ENCODE measurements at regions of chr12 and their contacts with region 1.

Region 1: GRCh38 chr12:56117778-56118687 is at the start of gene ZC3H10:
- DNase-seq: peak; percentile 80 to 99 (median 96)
- ATAC-seq: peak; percentile 89
- H3K4me3 ChIP-seq: peak within 1 kb of the TSS; percentile 95
- H3K4me3 Mint-ChIP-seq: peak within 1 kb of the TSS; percentile 87 to 100 (median 96)
- H3K27ac ChIP-seq: peak within 1 kb of the TSS; percentile 93
- H3K27ac Mint-ChIP-seq: peak within 1 kb of the TSS; percentile 95 to 99 (median 98)
- H3K4me1 ChIP-seq: peaks cover 24 to 25% of the 10 kb centered on the region in 2 donors
- H3K4me1 Mint-ChIP-seq: peaks cover 24 to 47% (median 34%) of the 10 kb centered on the region in 7 donors
- H3K27me3 ChIP-seq: no peaks in the 10 kb centered on the region
- H3K27me3 Mint-ChIP-seq: no peaks in the 10 kb centered on the region
- total RNA-seq, gene ZC3H10: 7.8 to 16.3 (median 13.3) TPM

Region 2: GRCh38 chr12:55926738-55927587 is 191.1 kb before region 1 on chr12:
- CTCF ChIA-PET with region 1: no interaction called
- POLR2A ChIA-PET with region 1: interaction called, 12 read pairs
- intact Hi-C with region 1: loop called (anchors 1 to 2 kb)
- DNase-seq: peak; percentile 70 to 91 (median 87)
- ATAC-seq: peak; percentile 65
- H3K4me3 ChIP-seq: peak overlapping the region; percentile 99
- H3K4me3 Mint-ChIP-seq: peak overlapping the region; percentile 96 to 100 (median 98)
- H3K27ac ChIP-seq: peak overlapping the region; percentile 90
- H3K27ac Mint-ChIP-seq: peak overlapping the region; percentile 96 to 100 (median 97)
- H3K4me1 ChIP-seq: peaks cover 25 to 28% of the 10 kb centered on the region in 2 donors
- H3K4me1 Mint-ChIP-seq: peaks cover 33 to 61% (median 50%) of the 10 kb centered on the region in 7 donors
- H3K27me3 ChIP-seq: no peaks in the 10 kb centered on the region
- H3K27me3 Mint-ChIP-seq: peaks cover 0 to 2% (median 0%) of the 10 kb centered on the region in 5 donors

Region 3: DNA sequence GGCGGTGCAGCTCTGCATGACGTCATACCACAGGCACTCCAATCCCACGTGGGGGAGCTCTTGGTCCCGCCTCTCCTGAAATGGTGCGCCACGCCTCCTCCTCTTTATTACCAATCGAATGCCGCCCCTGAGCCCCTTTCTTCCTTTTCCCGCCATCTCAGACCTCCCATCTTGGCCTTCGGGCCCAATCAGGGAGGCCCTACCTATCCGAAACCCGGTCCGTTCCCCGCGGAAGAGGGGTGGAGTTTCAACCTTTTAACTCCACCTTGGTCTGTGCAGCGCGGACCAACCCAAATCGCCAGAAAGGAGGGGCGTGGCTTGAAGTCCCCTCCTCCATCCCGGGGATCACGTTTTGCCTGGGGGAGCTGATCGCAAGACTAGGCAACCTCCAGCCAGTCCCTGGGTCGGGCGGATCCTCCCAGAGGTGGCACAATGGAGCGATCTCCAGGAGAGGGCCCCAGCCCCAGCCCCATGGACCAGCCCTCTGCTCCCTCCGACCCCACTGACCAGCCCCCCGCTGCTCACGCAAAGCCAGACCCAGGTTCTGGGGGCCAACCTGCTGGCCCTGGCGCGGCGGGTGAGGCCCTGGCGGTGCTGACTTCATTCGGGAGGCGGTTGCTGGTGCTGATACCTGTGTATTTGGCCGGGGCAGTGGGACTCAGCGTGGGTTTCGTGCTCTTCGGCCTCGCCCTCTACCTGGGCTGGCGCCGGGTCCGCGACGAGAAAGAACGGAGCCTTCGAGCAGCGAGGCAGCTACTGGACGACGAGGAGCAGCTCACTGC is 10.0 kb after region 1 on chr12 and contains the start of gene ESYT1:
- CTCF ChIA-PET with region 1: interaction called, 20 read pairs
- POLR2A ChIA-PET with region 1: interaction called, 94 read pairs
- intact Hi-C with region 1: loop called (anchors 1 kb)
- DNase-seq: peak; percentile 75 to 100 (median 98)
- ATAC-seq: peak; percentile 94
- H3K4me3 ChIP-seq: peak within 1 kb of the TSS; percentile 77
- H3K4me3 Mint-ChIP-seq: peak within 1 kb of the TSS; percentile 95 to 100 (median 98)
- H3K27ac ChIP-seq: peak within 1 kb of the TSS; percentile 84
- H3K27ac Mint-ChIP-seq: peak within 1 kb of the TSS; percentile 86 to 99 (median 91)
- H3K4me1 ChIP-seq: peaks cover 39 to 54% of the 10 kb centered on the region in 2 donors
- H3K4me1 Mint-ChIP-seq: peaks cover 40 to 76% (median 65%) of the 10 kb centered on the region in 7 donors
- H3K27me3 ChIP-seq: no peaks in the 10 kb centered on the region
- H3K27me3 Mint-ChIP-seq: no peaks in the 10 kb centered on the region
- total RNA-seq, gene ESYT1: 121 to 300 (median 221) TPM

Region 4: DNA sequence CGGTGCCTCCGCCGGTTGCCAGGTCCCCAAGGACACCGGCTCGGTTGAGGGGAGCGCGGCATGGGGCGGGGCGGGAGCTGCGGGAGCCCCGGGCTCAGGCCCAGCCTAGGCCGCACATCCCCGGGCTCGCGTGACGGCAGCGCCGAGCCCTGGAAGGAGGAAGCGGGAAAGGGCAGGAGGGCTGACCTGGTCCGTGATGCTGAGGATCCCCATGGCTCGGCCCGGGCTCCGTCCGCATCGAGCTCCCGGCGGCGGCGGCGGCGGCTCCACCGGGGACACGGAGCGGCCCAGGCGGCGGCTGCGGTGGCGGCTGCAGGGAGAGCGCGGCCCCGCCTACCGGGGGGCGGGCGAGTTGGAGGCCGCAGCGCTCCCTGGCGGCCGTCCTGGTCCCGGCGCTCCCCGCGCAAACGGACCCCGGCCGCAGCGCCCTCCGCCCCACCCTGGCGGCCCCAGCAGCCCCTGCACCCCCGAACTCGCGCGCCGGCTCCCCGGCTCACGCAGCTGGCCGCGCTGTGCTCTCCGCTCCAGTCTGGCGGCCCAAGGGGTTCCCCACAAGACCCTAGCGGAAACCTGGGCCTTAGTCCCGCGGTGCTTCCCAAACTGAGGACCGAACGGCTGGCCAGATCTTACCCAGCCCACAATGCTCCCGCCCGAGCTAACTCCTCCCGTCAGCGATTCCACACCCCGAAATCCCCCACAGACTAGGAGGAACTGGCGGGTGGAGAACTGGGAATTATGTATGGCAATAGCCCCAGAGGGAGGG is 140.2 kb after region 1 on chr12 and contains the start of gene ANKRD52:
- CTCF ChIA-PET with region 1: interaction called, 7 read pairs
- POLR2A ChIA-PET with region 1: interaction called, 7 read pairs
- intact Hi-C with region 1: loop called (anchors 1 kb)
- DNase-seq: peak; percentile 69 to 92 (median 84)
- ATAC-seq: peak; percentile 99
- H3K4me3 ChIP-seq: peak within 1 kb of the TSS; percentile 99
- H3K4me3 Mint-ChIP-seq: peak within 1 kb of the TSS; percentile 87 to 97 (median 93)
- H3K27ac ChIP-seq: peak within 1 kb of the TSS; percentile 90
- H3K27ac Mint-ChIP-seq: peak within 1 kb of the TSS; percentile 83 to 94 (median 90)
- H3K4me1 ChIP-seq: peaks cover 18 to 19% of the 10 kb centered on the region in 2 donors
- H3K4me1 Mint-ChIP-seq: peaks cover 13 to 27% (median 22%) of the 10 kb centered on the region in 7 donors
- H3K27me3 ChIP-seq: no peaks in the 10 kb centered on the region
- H3K27me3 Mint-ChIP-seq: peaks cover 0 to 2% (median 0%) of the 10 kb centered on the region in 5 donors
- total RNA-seq, gene ANKRD52: 26.9 to 64.4 (median 40.7) TPM

Region 5: GRCh38 chr12:56461235-56462159 is 343.5 kb after region 1 on chr12:
- CTCF ChIA-PET with region 1: interaction called, 6 read pairs
- POLR2A ChIA-PET with region 1: interaction called, 11 read pairs
- intact Hi-C with region 1: loop called (anchors 1 kb)
- DNase-seq: no peak
- ATAC-seq: no peak
- H3K4me3 ChIP-seq: no peak overlapping the region
- H3K4me3 Mint-ChIP-seq: no peak overlapping the region
- H3K27ac ChIP-seq: no peak overlapping the region
- H3K27ac Mint-ChIP-seq: no peak overlapping the region
- H3K4me1 ChIP-seq: peaks cover 0 to 6% of the 10 kb centered on the region in 2 donors
- H3K4me1 Mint-ChIP-seq: peaks cover 0 to 10% (median 5%) of the 10 kb centered on the region in 7 donors
- H3K27me3 ChIP-seq: no peaks in the 10 kb centered on the region
- H3K27me3 Mint-ChIP-seq: no peaks in the 10 kb centered on the region

Region 6: DNA sequence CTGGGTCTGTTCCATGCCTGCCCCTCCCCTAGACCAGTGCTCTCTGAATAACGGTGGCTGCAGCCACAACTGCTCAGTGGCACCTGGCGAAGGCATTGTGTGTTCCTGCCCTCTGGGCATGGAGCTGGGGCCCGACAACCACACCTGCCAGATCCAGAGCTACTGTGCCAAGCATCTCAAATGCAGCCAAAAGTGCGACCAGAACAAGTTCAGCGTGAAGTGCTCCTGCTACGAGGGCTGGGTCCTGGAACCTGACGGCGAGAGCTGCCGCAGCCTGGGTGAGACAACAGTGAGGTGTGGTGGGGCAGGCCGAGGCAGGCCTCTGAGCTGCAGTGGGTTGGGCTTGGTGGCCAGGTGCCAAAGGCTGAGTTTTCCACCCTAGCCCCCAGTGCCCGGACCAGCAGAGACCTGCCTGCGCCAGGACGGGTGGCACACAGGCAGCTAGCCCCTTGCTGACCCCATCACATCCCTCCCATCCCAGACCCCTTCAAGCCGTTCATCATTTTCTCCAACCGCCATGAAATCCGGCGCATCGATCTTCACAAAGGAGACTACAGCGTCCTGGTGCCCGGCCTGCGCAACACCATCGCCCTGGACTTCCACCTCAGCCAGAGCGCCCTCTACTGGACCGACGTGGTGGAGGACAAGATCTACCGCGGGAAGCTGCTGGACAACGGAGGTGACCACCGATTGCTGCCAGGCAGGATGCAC is 1057.5 kb after region 1 on chr12:
- CTCF ChIA-PET with region 1: no interaction called
- POLR2A ChIA-PET with region 1: no interaction called
- intact Hi-C with region 1: no loop called
- DNase-seq: peak in 4 of 9 donors; percentile 13 to 66 (median 26)
- ATAC-seq: peak; percentile 63
- H3K4me3 ChIP-seq: no peak overlapping the region
- H3K4me3 Mint-ChIP-seq: no peak overlapping the region
- H3K27ac ChIP-seq: no peak overlapping the region
- H3K27ac Mint-ChIP-seq: peak overlapping the region in 1 of 9 donors; percentile 46
- H3K4me1 ChIP-seq: no peaks in the 10 kb centered on the region
- H3K4me1 Mint-ChIP-seq: peaks cover 0 to 6% (median 0%) of the 10 kb centered on the region in 7 donors
- H3K27me3 ChIP-seq: no peaks in the 10 kb centered on the region
- H3K27me3 Mint-ChIP-seq: no peaks in the 10 kb centered on the region

Region 7: GRCh38 chr12:57487597-57488401 is 1369.8 kb after region 1 on chr12 and contains the start of gene MARS1:
- CTCF ChIA-PET with region 1: no interaction called
- POLR2A ChIA-PET with region 1: no interaction called
- intact Hi-C with region 1: loop called in 1 of 2 experiments (anchors 5 kb)
- DNase-seq: peak; percentile 71 to 95 (median 93)
- ATAC-seq: peak; percentile 99
- H3K4me3 ChIP-seq: peak within 1 kb of the TSS; percentile 89
- H3K4me3 Mint-ChIP-seq: peak within 1 kb of the TSS; percentile 89 to 100 (median 98)
- H3K27ac ChIP-seq: peak within 1 kb of the TSS; percentile 86
- H3K27ac Mint-ChIP-seq: peak within 1 kb of the TSS; percentile 86 to 99 (median 96)
- H3K4me1 ChIP-seq: peaks cover 17 to 21% of the 10 kb centered on the region in 2 donors
- H3K4me1 Mint-ChIP-seq: peaks cover 21 to 48% (median 40%) of the 10 kb centered on the region in 7 donors
- H3K27me3 ChIP-seq: no peaks in the 10 kb centered on the region
- H3K27me3 Mint-ChIP-seq: peaks cover 0 to 2% (median 0%) of the 10 kb centered on the region in 5 donors
- total RNA-seq, gene MARS1: 178 to 229 (median 197) TPM

Measured in naive thymus-derived CD4-positive, alpha-beta T cell (primary cell).